Activated CD4-positive, alpha-beta T cell treated with anti-CD3 and anti-CD28 coated beads for 36 hours (primary cell): ENCODE measurements at regions of chr5 and their contacts with region 1.

Region 1: GRCh38 chr5:170466988-170467707 is 36.7 kb upstream of the KCNIP1 start:
- DNase-seq: peak; percentile 74
- ATAC-seq: peak; percentile 98
- H3K4me3 Mint-ChIP-seq: no peak overlapping the region
- H3K27ac Mint-ChIP-seq: no peak overlapping the region
- H3K4me1 Mint-ChIP-seq: no peaks in the 10 kb centered on the region
- H3K27me3 Mint-ChIP-seq: peaks cover 12% of the 10 kb centered on the region

Region 2: DNA sequence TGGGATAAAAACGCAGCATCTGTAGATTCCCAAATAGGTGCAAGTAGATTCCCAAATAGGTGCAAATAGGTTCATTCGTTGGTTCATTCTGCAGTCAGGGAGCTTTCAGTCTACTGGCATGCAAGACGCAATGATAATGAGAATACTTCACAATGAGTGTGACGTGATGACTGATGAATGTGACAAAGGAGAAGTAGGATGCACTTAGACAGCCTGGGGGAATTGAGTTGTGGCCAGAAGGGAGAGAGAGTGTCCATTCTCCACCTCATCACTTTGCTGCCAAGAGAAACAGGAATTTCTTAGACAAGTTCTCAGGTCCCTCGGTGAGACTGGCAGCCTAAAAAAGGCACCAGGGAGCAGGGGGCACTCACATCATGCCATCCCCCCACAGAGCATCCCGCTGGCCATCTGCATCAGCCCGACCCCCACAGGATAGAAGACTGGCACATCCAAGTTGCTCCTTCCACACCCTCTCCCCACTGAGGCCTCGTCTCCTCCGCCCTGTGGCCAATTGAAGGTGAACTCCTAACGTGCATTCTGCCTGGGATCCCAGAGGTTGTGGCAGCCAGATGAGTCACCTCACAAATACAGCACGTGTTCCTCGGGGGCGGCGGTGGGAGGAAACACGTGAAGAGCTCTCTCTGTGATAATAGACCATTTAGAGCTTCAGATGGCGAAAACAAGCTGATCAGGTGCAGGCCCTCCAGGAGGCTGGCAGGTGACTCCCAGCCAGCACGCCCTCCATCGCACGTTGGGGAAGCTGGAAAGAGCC is 16.7 kb after region 1 on chr5:
- CTCF ChIA-PET with region 1: no interaction called
- POLR2A ChIA-PET with region 1: no interaction called
- intact Hi-C with region 1: no loop called
- DNase-seq: peak; percentile 21
- ATAC-seq: no peak
- H3K4me3 Mint-ChIP-seq: no peak overlapping the region
- H3K27ac Mint-ChIP-seq: no peak overlapping the region
- H3K4me1 Mint-ChIP-seq: no peaks in the 10 kb centered on the region
- H3K27me3 Mint-ChIP-seq: peaks cover 16% of the 10 kb centered on the region

Region 3: GRCh38 chr5:170597109-170597751 is 130.1 kb after region 1 on chr5:
- CTCF ChIA-PET with region 1: interaction called, 3 read pairs
- POLR2A ChIA-PET with region 1: no interaction called
- intact Hi-C with region 1: loop called in 1 of 2 experiments (anchors 1 kb)
- DNase-seq: peak; percentile 69
- ATAC-seq: peak; percentile 94
- H3K4me3 Mint-ChIP-seq: no peak overlapping the region
- H3K27ac Mint-ChIP-seq: no peak overlapping the region
- H3K4me1 Mint-ChIP-seq: peaks cover 20% of the 10 kb centered on the region
- H3K27me3 Mint-ChIP-seq: peaks cover 41% of the 10 kb centered on the region